ENCODE measurements at regions of chr22 and their contacts with region 1.

Region 1: DNA sequence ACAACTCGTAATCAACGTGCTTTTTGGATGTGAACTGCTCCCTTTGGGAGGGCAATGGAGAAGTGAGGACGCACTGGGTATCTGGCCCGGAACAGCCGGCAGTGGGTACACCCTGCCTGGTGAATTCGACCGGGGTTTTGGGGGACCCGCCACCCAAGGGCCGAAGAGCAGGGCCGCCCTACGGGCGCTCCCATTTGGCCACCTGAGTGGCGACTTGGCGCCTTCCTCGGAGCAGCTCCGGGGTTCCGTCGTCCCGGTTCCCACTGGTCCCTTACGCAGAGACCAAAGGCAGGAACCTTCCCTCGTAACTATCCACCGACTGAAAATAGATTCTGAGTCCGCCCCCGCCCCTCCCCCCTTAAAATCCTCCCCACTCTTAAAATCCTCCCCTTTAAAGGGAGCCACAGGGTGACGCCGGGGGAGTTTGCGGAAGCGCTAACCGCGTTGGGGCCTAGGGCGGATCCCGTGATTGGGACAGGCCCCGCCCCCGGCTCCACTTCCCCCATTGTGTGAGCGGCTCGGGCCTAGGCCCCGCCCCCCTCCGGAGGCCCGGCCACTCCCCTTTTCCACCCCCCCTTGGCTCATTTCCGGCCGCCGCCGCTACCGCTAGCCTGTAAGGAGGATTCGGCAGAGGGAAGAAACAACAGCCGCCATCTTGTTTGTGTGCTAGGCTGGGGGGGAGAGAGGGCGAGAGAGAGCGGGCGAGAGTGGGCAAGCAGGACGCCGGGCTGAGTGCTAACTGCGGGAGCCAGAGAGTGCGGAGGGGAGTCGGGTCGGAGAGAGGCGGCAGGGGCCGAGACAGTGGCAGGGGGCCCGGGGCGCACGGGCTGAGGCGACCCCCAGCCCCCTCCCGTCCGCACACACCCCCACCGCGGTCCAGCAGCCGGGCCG is 1.0 kb upstream of the EP300 start:
- DNase-seq: peak; percentile 99
- H3K4me3 ChIP-seq: peak overlapping the region; percentile 85
- H3K27ac ChIP-seq: peak overlapping the region; percentile 95
- H3K4me1 ChIP-seq: peaks cover 18% of the 10 kb centered on the region
- CTCF ChIP-seq: no peak

Region 2: GRCh38 chr22:40856513-40857308 is 234.7 kb before region 1 on chr22 and contains the starts of genes ST13 and XPNPEP3:
- CTCF ChIA-PET with region 1: no interaction called
- POLR2A ChIA-PET with region 1: no interaction called
- intact Hi-C with region 1: loop called (anchors 5 kb)
- DNase-seq: peak; percentile 96
- H3K4me3 ChIP-seq: peak within 1 kb of the TSS; percentile 95
- H3K27ac ChIP-seq: peak within 1 kb of the TSS; percentile 85
- H3K4me1 ChIP-seq: peaks cover 39% of the 10 kb centered on the region
- CTCF ChIP-seq: peak; percentile 57; the same call in 1 of the 2 replicates
- total RNA-seq, gene ST13: 121 and 255 TPM in 2 replicates
- total RNA-seq, gene XPNPEP3: 4.9 and 12.2 TPM in 2 replicates

Region 3: DNA sequence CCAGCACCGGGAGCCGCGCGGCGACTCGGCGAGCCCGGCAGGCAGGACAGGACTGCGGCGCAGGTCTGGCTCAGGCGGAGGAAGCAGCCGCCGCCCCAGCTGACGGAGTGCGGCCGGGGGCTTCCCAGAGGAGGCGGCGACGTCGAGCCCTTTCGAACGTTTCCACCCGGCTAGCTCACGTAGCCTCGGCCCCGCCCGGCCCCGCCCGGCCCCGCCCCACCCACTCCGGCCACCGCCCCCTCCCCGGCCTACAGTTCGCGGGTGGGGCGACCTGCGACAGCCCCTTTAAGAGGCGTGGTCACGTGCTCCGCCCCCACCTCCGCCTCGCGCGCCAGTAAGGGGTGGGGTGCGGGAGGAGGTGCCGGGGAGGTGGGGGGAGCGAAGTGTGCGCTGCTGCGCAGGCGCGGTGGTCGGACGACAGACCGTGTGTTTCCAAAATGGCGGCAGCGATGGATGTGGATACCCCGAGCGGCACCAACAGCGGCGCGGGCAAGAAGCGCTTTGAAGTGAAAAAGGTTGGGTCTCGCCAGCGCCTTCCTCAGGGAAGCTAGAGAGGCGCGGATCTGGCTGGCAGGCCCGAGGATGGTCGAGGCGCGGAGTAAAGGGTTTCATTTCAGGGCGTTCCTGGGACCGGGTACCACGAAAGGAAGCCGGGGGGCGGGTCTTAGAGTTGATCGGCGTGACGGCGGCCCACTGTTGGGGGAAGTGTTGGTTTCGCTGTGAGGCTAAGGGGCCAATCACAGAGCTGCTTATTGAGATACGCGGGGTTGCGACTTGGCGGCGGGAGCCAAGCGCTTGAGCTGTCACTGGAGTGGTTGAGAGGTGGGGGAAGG is 140.2 kb before region 1 on chr22 and contains the start of gene RBX1:
- CTCF ChIA-PET with region 1: no interaction called
- POLR2A ChIA-PET with region 1: interaction called, 5 read pairs
- intact Hi-C with region 1: loop called (anchors 1 kb)
- DNase-seq: peak; percentile 99
- H3K4me3 ChIP-seq: peak within 1 kb of the TSS; percentile 95
- H3K27ac ChIP-seq: peak within 1 kb of the TSS; percentile 59
- H3K4me1 ChIP-seq: peaks cover 18% of the 10 kb centered on the region
- CTCF ChIP-seq: no peak
- total RNA-seq, gene RBX1: 77.3 and 83.6 TPM in 2 replicates

Region 4: GRCh38 chr22:41022470-41023298 is 68.7 kb before region 1 on chr22:
- CTCF ChIA-PET with region 1: no interaction called
- POLR2A ChIA-PET with region 1: interaction called, 3 read pairs
- intact Hi-C with region 1: loop called (anchors 1 kb)
- DNase-seq: peak; percentile 92
- H3K4me3 ChIP-seq: peak overlapping the region; percentile 87
- H3K27ac ChIP-seq: peak overlapping the region; percentile 81
- H3K4me1 ChIP-seq: peaks cover 22% of the 10 kb centered on the region
- CTCF ChIP-seq: no peak

Region 5: GRCh38 chr22:41070665-41071331 is 20.6 kb before region 1 on chr22:
- CTCF ChIA-PET with region 1: no interaction called
- POLR2A ChIA-PET with region 1: interaction called, 12 read pairs
- intact Hi-C with region 1: loop called (anchors 1 kb)
- DNase-seq: no peak
- H3K4me3 ChIP-seq: no peak overlapping the region
- H3K27ac ChIP-seq: peak overlapping the region; percentile 45
- H3K4me1 ChIP-seq: peaks cover 50% of the 10 kb centered on the region
- CTCF ChIP-seq: no peak

Region 6: GRCh38 chr22:41204992-41205900 is 113.9 kb after region 1 on chr22 and contains the start of gene L3MBTL2:
- CTCF ChIA-PET with region 1: no interaction called
- POLR2A ChIA-PET with region 1: no interaction called
- intact Hi-C with region 1: loop called (anchors 5 kb)
- DNase-seq: peak; percentile 97
- H3K4me3 ChIP-seq: peak within 1 kb of the TSS; percentile 76
- H3K27ac ChIP-seq: peak within 1 kb of the TSS; percentile 54
- H3K4me1 ChIP-seq: peaks cover 19% of the 10 kb centered on the region
- CTCF ChIP-seq: no peak
- total RNA-seq, gene L3MBTL2: 23.3 and 28.1 TPM in 2 replicates

Region 7: DNA sequence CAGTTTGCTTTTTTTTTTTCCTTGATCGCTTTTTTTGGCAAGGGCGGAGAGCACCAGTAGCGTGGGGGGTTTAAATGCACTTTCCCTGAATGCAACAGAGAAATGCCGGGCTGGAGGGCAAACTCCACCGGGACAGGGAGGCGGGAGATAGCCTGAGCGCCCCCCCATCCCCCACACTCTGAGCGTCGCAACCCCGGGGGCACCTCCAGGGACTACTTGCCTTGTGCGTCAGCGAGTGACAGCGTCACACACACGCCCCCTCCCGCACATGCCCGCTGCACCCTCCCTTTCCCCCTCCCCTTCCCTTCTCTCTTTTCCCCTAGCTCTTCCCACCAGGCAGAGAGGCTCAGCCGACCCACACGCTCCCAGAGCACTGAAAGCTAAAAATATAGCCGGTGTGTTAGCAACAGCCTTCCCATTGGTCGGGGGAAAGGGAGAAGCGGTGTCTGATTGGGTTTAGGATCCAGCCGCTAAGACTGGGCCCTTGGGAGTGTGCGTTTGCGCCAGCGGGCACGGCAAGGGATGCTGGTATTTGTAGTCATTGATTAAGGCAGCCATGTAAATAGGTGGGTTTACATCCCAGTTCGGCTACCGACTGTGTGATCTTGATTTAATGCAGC is 356.9 kb after region 1 on chr22:
- CTCF ChIA-PET with region 1: no interaction called
- POLR2A ChIA-PET with region 1: no interaction called
- intact Hi-C with region 1: loop called (anchors 10 kb)
- DNase-seq: peak; percentile 97
- H3K4me3 ChIP-seq: peak overlapping the region; percentile 83
- H3K27ac ChIP-seq: peak overlapping the region; percentile 85
- H3K4me1 ChIP-seq: peaks cover 14% of the 10 kb centered on the region
- CTCF ChIP-seq: no peak